Activated CD4-positive, alpha-beta memory T cell treated with anti-CD3 and anti-CD28 coated beads, Interleukin-2, amount 10 ng/mL, durations not matched to agents 7 days and 5 days (primary cell): ENCODE measurements at regions of chr20 and their contacts with region 1.

Region 1: GRCh38 chr20:17504898-17505635 is 26.1 kb downstream of the BFSP1 start:
- DNase-seq: no peak
- H3K4me3 Mint-ChIP-seq: peak overlapping the region; percentile 79
- H3K27ac Mint-ChIP-seq: peak overlapping the region; percentile 93
- H3K4me1 Mint-ChIP-seq: peaks cover 69% of the 10 kb centered on the region
- H3K27me3 Mint-ChIP-seq: peaks cover 7% of the 10 kb centered on the region

Region 2: GRCh38 chr20:17473659-17474058 is 31.4 kb before region 1 on chr20:
- CTCF ChIA-PET with region 1: no interaction called
- POLR2A ChIA-PET with region 1: no interaction called
- DNase-seq: no peak
- H3K4me3 Mint-ChIP-seq: no peak overlapping the region
- H3K27ac Mint-ChIP-seq: no peak overlapping the region
- H3K4me1 Mint-ChIP-seq: no peaks in the 10 kb centered on the region
- H3K27me3 Mint-ChIP-seq: peaks cover 2% of the 10 kb centered on the region

Region 3: DNA sequence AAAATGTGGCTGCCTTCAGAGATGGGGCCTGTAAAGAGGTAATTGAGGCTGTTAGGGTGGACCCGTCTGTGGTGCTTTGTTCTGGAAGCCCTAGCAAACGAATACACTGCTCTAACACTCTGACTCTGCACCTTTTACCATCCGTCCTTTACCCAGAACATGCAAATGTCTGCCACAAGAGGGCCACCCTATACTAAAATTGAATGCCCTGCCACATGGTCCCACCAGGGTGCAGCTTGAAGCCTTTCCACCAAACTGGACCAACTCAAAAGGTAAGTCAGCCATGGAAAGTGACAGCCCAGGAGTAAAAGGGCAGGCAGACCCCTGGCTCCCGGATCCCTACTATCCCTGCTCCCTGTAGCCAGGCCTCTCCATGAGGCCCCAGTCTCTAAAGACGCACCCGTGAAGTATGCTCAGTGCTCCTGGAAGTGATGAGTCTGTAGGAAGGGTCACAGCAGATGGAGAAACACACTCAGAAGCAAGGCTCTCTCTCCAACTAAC is 31.9 kb after region 1 on chr20:
- CTCF ChIA-PET with region 1: interaction called, 77 read pairs
- POLR2A ChIA-PET with region 1: interaction called, 71 read pairs
- DNase-seq: peak; percentile 77
- H3K4me3 Mint-ChIP-seq: no peak overlapping the region
- H3K27ac Mint-ChIP-seq: no peak overlapping the region
- H3K4me1 Mint-ChIP-seq: peaks cover 45% of the 10 kb centered on the region
- H3K27me3 Mint-ChIP-seq: peaks cover 25% of the 10 kb centered on the region

Region 4: GRCh38 chr20:17611540-17612286 is 106.6 kb after region 1 on chr20:
- CTCF ChIA-PET with region 1: interaction called, 22 read pairs
- POLR2A ChIA-PET with region 1: interaction called, 23 read pairs
- DNase-seq: peak; percentile 35
- H3K4me3 Mint-ChIP-seq: peak overlapping the region; percentile 48
- H3K27ac Mint-ChIP-seq: peak overlapping the region; percentile 95
- H3K4me1 Mint-ChIP-seq: peaks cover 50% of the 10 kb centered on the region
- H3K27me3 Mint-ChIP-seq: no peaks in the 10 kb centered on the region

Region 5: GRCh38 chr20:17898548-17898994 is 393.5 kb after region 1 on chr20:
- CTCF ChIA-PET with region 1: interaction called, 20 read pairs
- POLR2A ChIA-PET with region 1: interaction called, 5 read pairs
- DNase-seq: peak; percentile 75
- H3K4me3 Mint-ChIP-seq: no peak overlapping the region
- H3K27ac Mint-ChIP-seq: no peak overlapping the region
- H3K4me1 Mint-ChIP-seq: peaks cover 40% of the 10 kb centered on the region
- H3K27me3 Mint-ChIP-seq: peaks cover 28% of the 10 kb centered on the region

Region 6: GRCh38 chr20:17968366-17969279 is 463.6 kb after region 1 on chr20 and contains the starts of genes MGME1 and SNX5:
- CTCF ChIA-PET with region 1: interaction called, 5 read pairs
- POLR2A ChIA-PET with region 1: interaction called, 24 read pairs
- DNase-seq: peak; percentile 100
- H3K4me3 Mint-ChIP-seq: peak within 1 kb of the TSS; percentile 97
- H3K27ac Mint-ChIP-seq: peak within 1 kb of the TSS; percentile 98
- H3K4me1 Mint-ChIP-seq: peaks cover 34% of the 10 kb centered on the region
- H3K27me3 Mint-ChIP-seq: no peaks in the 10 kb centered on the region
- total RNA-seq, gene MGME1: 53.9 to 56.7 TPM
- total RNA-seq, gene SNX5: 236 to 250 TPM